ENCODE measurements at regions of chr10 and their contacts with region 1.

Region 1: DNA sequence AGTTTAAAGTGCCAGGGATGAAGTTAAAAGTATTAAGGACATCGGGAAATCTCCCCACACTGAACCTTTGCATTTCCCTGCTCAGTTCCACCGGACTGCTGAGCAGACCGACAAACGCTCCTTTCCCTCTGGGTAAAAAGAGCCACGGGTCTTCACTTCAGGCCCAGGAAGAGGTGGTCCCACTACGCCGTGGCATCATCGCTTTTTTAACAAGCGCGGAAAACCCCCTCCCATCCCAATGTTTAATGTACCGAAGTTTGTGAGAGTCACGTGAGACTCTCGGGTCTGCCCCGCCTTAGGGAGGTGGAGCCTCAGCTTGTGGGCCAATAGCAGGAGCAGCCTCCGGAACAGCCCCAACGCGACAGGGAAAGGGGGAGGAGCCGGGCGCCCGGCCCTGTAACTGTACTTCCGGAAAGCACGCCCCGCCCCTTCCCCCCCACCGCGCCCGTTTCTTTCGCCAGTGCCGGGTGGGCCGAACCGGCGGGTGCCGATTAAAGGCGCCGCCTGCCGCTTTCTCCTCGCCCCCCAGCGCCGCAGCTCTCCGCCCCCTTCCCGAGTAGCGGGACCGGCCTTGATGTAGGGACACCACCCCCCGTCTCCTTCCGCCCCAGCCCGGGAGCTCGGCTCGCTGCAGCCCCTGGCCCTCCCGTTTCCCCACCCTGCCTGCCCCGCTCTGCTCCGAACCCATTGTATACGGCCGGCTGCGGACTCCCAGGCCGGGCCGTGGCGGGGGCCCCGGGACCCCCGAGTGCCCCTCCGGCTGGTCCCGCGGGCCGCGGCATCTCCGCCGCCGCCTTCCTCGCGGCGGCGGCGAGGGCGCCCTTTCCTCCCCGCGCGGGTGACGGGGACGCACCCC is 2.2 kb upstream of the TRIM8 start:
- DNase-seq: peak; percentile 98
- ATAC-seq: peak; percentile 64
- H3K4me3 ChIP-seq: peak overlapping the region; percentile 74 to 89 (median 77)
- H3K4me3 Mint-ChIP-seq: peak overlapping the region; percentile 93
- H3K27ac ChIP-seq: peak overlapping the region; percentile 93 to 97
- H3K27ac Mint-ChIP-seq: peak overlapping the region; percentile 95
- H3K4me1 ChIP-seq: peaks cover 11 to 21% of the 10 kb centered on the region in 2 donors
- H3K4me1 Mint-ChIP-seq: peaks cover 23% of the 10 kb centered on the region
- H3K27me3 ChIP-seq: no peaks in the 10 kb centered on the region
- H3K27me3 Mint-ChIP-seq: no peaks in the 10 kb centered on the region
- CTCF ChIP-seq: no peak

Region 2: DNA sequence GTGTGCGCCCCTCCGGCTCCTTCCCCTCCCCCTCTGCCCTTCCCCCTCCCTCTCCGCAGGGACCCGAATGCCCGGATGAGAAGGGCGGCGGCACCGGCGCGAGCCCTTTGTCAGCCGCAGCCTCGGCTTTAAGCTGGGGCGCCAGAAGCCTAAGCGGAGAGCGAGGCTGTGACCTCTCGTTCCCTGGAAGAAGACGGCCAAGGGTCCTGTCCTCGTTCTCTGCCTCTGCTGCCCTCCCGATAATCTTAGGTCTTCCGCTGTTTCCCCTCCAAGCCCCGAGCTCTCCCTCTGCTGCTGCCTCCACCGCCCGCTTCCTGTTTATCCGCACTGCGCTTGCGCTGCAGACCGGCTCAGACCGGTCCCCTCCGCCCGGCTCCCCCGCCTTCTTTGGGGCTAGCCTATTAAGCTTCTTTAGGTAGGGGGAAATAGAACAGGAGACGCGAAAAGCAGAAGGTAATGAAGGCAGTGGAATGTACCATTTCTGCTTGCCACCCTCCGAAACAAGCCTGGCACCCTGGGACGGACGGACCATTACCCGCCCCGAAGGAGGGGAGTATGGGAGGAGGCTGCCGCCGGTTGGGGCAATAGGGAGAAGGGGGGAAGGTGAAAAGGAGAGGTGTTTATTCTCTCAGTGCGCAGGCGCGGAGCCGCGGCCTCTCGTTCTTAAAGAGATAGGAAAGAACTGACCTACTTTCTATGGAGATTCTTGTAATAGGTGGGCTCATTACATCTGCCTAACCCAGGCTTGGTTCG is 823.8 kb before region 1 on chr10 and contains the start of gene OGA:
- CTCF ChIA-PET with region 1: no interaction called
- POLR2A ChIA-PET with region 1: interaction called, 4 read pairs
- intact Hi-C with region 1: loop called (anchors 5 kb)
- DNase-seq: peak; percentile 98
- ATAC-seq: peak; percentile 87
- H3K4me3 ChIP-seq: peak within 1 kb of the TSS; percentile 56 to 97 (median 92)
- H3K4me3 Mint-ChIP-seq: peak within 1 kb of the TSS; percentile 94
- H3K27ac ChIP-seq: peak within 1 kb of the TSS; percentile 81 to 85
- H3K27ac Mint-ChIP-seq: peak within 1 kb of the TSS; percentile 99
- H3K4me1 ChIP-seq: peaks cover 27% of the 10 kb centered on the region in 2 donors
- H3K4me1 Mint-ChIP-seq: peaks cover 35% of the 10 kb centered on the region
- H3K27me3 ChIP-seq: no peaks in the 10 kb centered on the region
- H3K27me3 Mint-ChIP-seq: no peaks in the 10 kb centered on the region
- CTCF ChIP-seq: no peak
- total RNA-seq, gene OGA: 418 and 442 TPM in 2 replicates

Region 3: DNA sequence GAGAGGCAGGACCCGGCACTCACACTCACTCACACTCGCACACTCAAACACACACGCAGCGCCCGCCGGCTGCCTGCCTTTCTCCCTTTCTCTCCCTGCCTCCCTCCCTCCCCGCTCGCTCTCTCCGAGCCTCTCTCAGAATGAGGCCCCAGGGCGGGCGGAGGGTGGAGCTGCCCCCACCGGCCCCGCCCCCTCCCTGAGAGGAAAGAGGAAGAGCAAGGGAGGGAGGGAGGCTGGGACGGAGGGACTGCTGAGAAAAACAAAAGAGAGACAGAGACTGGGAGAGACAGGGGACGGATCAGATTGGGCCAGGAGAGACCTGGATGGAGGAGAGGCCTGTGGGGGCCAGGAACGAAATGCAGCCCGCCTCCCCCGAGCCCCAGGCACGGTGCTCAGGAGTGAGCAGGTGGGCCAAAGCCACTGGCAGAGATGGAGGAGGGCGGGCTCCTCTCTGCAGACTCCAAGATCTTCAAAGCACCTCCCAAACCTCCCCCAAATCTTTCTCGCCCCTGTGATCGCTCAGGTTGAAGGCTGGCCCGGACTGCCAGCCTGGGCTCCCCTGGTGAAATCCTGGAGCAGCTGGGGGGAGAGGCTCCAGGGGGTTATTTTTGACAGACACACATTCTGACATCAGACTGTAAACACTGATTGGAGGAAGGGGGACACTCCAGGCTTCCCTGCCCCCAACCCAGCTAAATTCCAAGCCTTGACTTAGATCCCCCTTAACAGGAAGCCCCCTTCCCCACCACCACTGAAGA is 527.1 kb before region 1 on chr10:
- CTCF ChIA-PET with region 1: no interaction called
- POLR2A ChIA-PET with region 1: interaction called, 15 read pairs
- intact Hi-C with region 1: loop called (anchors 2 kb)
- DNase-seq: peak; percentile 87
- ATAC-seq: peak; percentile 79
- H3K4me3 ChIP-seq: peak overlapping the region; percentile 45 to 64 (median 57)
- H3K4me3 Mint-ChIP-seq: peak overlapping the region; percentile 86
- H3K27ac ChIP-seq: peak overlapping the region; percentile 60 to 94
- H3K27ac Mint-ChIP-seq: peak overlapping the region; percentile 91
- H3K4me1 ChIP-seq: peaks cover 58 to 73% of the 10 kb centered on the region in 2 donors
- H3K4me1 Mint-ChIP-seq: peaks cover 63% of the 10 kb centered on the region
- H3K27me3 ChIP-seq: no peaks in the 10 kb centered on the region
- H3K27me3 Mint-ChIP-seq: no peaks in the 10 kb centered on the region
- CTCF ChIP-seq: no peak

Region 4: GRCh38 chr10:102245101-102245931 is 396.8 kb before region 1 on chr10 and contains the start of gene GBF1:
- CTCF ChIA-PET with region 1: no interaction called
- POLR2A ChIA-PET with region 1: no interaction called
- intact Hi-C with region 1: loop called (anchors 1 kb)
- DNase-seq: peak; percentile 98
- ATAC-seq: peak; percentile 86
- H3K4me3 ChIP-seq: peak within 1 kb of the TSS; percentile 80 to 99 (median 98)
- H3K4me3 Mint-ChIP-seq: peak within 1 kb of the TSS; percentile 94
- H3K27ac ChIP-seq: peak within 1 kb of the TSS; percentile 86 to 90
- H3K27ac Mint-ChIP-seq: peak within 1 kb of the TSS; percentile 38
- H3K4me1 ChIP-seq: peaks cover 50 to 51% of the 10 kb centered on the region in 2 donors
- H3K4me1 Mint-ChIP-seq: peaks cover 56% of the 10 kb centered on the region
- H3K27me3 ChIP-seq: peaks cover 0 to 31% (median 27%) of the 10 kb centered on the region in 4 experiments
- H3K27me3 Mint-ChIP-seq: peaks cover 23% of the 10 kb centered on the region
- CTCF ChIP-seq: no peak
- total RNA-seq, gene GBF1: 39.3 and 41.2 TPM in 2 replicates

Region 5: GRCh38 chr10:102652170-102652916 is 10.2 kb after region 1 on chr10:
- CTCF ChIA-PET with region 1: interaction called, 11 read pairs
- POLR2A ChIA-PET with region 1: interaction called, 15 read pairs
- intact Hi-C with region 1: loop called (anchors 1 kb)
- DNase-seq: peak; percentile 76
- ATAC-seq: peak; percentile 54
- H3K4me3 ChIP-seq: peak overlapping the region in 2 of 5 experiments; percentile 23 to 35
- H3K4me3 Mint-ChIP-seq: peak overlapping the region; percentile 90
- H3K27ac ChIP-seq: peak overlapping the region; percentile 70 to 90
- H3K27ac Mint-ChIP-seq: peak overlapping the region; percentile 98
- H3K4me1 ChIP-seq: peaks cover 64 to 67% of the 10 kb centered on the region in 2 donors
- H3K4me1 Mint-ChIP-seq: peaks cover 71% of the 10 kb centered on the region
- H3K27me3 ChIP-seq: no peaks in the 10 kb centered on the region
- H3K27me3 Mint-ChIP-seq: no peaks in the 10 kb centered on the region
- CTCF ChIP-seq: no peak

Region 6: DNA sequence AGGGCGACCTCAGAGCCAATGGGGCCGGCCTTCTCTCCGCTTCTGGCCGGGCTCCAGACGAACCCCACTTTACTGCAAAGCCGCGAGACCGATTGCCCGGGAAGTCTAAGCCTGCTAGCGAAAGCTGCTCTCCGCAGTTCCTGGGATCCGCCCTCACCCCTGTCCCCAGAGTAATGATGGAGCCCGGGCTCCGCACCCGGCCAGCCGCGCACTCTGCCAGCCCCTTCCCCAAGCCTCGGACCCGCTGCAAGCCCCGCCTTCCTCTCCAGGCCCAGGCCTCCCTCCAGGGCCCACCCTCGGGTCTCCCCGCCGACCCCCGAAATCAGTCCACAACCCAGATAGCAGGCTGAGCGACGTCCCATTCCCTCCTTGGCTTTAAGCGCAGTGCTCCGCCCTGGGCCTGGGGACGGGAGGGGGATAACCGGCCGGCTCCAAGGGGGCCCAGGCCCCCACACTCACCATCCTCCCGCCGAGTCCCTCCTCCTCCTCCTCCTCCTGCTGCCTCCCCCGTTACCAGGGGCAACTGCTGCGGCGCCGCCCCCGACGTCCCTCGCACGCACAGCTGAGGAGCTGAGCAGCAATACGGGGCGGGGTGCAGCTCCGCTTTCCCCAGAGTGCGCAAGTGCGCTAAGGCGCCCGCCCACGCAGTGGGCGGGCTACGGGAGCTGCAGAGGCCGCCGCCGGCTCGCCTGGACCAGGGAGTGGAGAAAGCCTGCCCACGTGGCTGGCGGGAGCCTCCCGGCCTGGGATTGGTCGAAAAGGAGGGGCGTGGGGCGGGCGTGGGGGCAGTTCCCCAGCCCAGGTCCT is 71.9 kb after region 1 on chr10 and contains the start of gene ARL3:
- CTCF ChIA-PET with region 1: interaction called, 30 read pairs
- POLR2A ChIA-PET with region 1: interaction called, 45 read pairs
- intact Hi-C with region 1: loop called (anchors 1 kb)
- DNase-seq: peak; percentile 96
- ATAC-seq: peak; percentile 87
- H3K4me3 ChIP-seq: peak within 1 kb of the TSS; percentile 67 to 94 (median 70)
- H3K4me3 Mint-ChIP-seq: peak within 1 kb of the TSS; percentile 92
- H3K27ac ChIP-seq: peak within 1 kb of the TSS; percentile 64 to 92
- H3K27ac Mint-ChIP-seq: peak within 1 kb of the TSS; percentile 93
- H3K4me1 ChIP-seq: peaks cover 15 to 21% of the 10 kb centered on the region in 2 donors
- H3K4me1 Mint-ChIP-seq: peaks cover 36% of the 10 kb centered on the region
- H3K27me3 ChIP-seq: no peaks in the 10 kb centered on the region
- H3K27me3 Mint-ChIP-seq: no peaks in the 10 kb centered on the region
- CTCF ChIP-seq: peak; percentile 72
- total RNA-seq, gene ARL3: 5.5 and 6.3 TPM in 2 replicates